ENCODE measurements at regions of chr2 and their contacts with region 1.

Region 1: GRCh38 chr2:148503516-148503915 is 141.0 kb upstream of the EPC2 start:
- DNase-seq: no peak
- H3K4me3 ChIP-seq: no peak overlapping the region
- H3K27ac ChIP-seq: no peak overlapping the region
- H3K4me1 ChIP-seq: peaks cover 0 to 22% (median 0%) of the 10 kb centered on the region in 4 donors
- H3K27me3 ChIP-seq: no peaks in the 10 kb centered on the region
- CTCF ChIP-seq: no peak

Region 2: DNA sequence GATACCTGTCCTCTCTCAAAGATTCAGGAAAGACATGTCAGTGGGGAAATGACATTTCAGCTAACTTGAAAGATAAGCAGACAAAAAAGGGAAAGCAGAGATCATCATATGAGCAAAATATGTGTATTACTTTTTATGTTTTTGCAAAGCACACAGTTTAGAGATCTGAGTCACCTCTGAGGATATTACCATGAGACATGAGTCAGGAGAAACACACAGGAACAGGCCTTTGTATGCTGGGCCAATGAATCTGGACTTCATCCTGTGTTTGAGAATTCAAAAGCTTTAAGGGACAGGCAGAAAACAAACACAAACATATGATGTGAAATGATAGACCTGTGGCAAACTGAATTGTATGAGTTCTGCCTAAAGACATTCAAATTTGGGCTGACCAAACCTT is 165.0 kb before region 1 on chr2:
- intact Hi-C with region 1: no loop called
- DNase-seq: no peak
- H3K4me3 ChIP-seq: no peak overlapping the region
- H3K27ac ChIP-seq: no peak overlapping the region
- H3K4me1 ChIP-seq: no peaks in the 10 kb centered on the region
- H3K27me3 ChIP-seq: no peaks in the 10 kb centered on the region
- CTCF ChIP-seq: no peak

Region 3: GRCh38 chr2:148416248-148416647 is 87.3 kb before region 1 on chr2:
- intact Hi-C with region 1: no loop called
- DNase-seq: no peak
- H3K4me3 ChIP-seq: no peak overlapping the region
- H3K27ac ChIP-seq: no peak overlapping the region
- H3K4me1 ChIP-seq: no peaks in the 10 kb centered on the region
- H3K27me3 ChIP-seq: no peaks in the 10 kb centered on the region
- CTCF ChIP-seq: no peak

Region 4: DNA sequence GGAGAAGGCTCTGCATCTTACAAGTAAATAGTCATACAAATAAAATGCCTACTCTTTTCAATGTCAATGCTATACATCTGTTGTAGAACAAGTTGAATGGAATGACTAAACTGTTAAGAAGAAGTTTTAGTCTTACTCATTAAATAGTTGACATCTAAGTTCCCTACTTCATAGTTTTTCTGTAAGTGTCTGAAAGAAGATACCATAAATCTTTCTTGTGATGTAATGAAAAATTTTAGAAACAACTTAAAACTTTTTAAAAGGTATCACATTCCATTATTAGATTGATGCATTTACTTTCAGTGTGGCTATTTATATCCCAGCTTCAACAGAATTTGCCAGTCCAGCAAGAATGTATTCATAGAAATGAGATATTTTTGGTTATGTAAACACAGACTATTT is 44.1 kb before region 1 on chr2:
- intact Hi-C with region 1: no loop called
- DNase-seq: no peak
- H3K4me3 ChIP-seq: no peak overlapping the region
- H3K27ac ChIP-seq: peak overlapping the region in 1 of 2 donors; percentile 46
- H3K4me1 ChIP-seq: peaks cover 0 to 68% (median 17%) of the 10 kb centered on the region in 4 donors
- H3K27me3 ChIP-seq: no peaks in the 10 kb centered on the region
- CTCF ChIP-seq: no peak

Region 5: GRCh38 chr2:148524519-148524919 is 21.0 kb after region 1 on chr2:
- intact Hi-C with region 1: loop called (anchors 2 kb)
- DNase-seq: no peak
- H3K4me3 ChIP-seq: no peak overlapping the region
- H3K27ac ChIP-seq: no peak overlapping the region
- H3K4me1 ChIP-seq: no peaks in the 10 kb centered on the region
- H3K27me3 ChIP-seq: no peaks in the 10 kb centered on the region
- CTCF ChIP-seq: no peak

Measured in tibial artery (tissue), 4 donors.